Activated naive CD4-positive, alpha-beta T cell treated with anti-CD3 and anti-CD28 coated beads for 36 hours (primary cell): ENCODE measurements at regions of chr2 and their contacts with region 1.

Region 1: DNA sequence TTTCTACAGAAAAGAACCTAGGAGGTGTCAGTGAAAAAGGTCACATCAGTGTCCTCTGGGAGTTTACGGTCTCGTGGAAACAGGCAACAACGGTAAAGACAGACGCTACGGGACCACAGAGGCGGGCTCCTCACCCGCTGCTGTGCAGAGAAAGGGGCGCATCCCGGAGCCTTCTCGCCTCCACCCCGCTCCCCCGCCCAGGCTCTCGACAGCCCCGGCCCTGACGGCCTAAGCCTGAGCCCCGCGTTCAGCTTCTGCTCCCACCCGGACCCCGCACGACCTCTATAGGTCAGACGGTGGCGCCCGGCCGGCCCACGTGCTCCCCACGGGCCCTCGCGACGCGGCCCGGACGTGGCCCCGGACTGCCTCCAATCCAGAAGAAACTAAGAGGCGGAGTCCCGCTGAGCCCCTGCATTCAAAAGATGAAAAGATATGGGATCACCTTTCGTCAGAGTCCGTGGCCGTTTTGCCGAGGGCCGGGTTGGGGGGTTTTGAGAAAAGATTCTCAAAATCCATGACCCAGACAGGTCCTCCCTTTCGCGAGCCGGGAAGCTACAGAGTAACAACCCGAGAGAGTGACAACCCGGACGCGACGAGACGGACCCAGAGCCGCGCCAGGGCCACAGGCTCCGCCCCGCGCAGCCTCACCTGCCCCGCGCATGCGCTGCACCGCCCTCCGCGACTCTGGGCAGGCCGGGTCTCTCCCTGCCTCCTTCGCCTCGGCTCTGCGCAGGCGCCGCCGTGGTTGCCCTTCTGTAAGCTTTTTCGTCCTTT is at the start of gene ZC3H8:
- DNase-seq: peak; percentile 97
- H3K4me3 Mint-ChIP-seq: peak within 1 kb of the TSS; percentile 83
- H3K27ac Mint-ChIP-seq: peak within 1 kb of the TSS; percentile 92
- H3K4me1 Mint-ChIP-seq: peaks cover 10% of the 10 kb centered on the region
- H3K27me3 Mint-ChIP-seq: no peaks in the 10 kb centered on the region
- total RNA-seq, gene ZC3H8: 15.5 to 18.7 TPM

Region 2: GRCh38 chr2:112054847-112055729 is 199.6 kb before region 1 on chr2 and contains the start of gene TMEM87B:
- CTCF ChIA-PET with region 1: no interaction called
- intact Hi-C with region 1: loop called (anchors 1 kb)
- DNase-seq: peak; percentile 99
- H3K4me3 Mint-ChIP-seq: peak within 1 kb of the TSS; percentile 97
- H3K27ac Mint-ChIP-seq: peak within 1 kb of the TSS; percentile 99
- H3K4me1 Mint-ChIP-seq: peaks cover 42% of the 10 kb centered on the region
- H3K27me3 Mint-ChIP-seq: no peaks in the 10 kb centered on the region
- total RNA-seq, gene TMEM87B: 10.5 to 12.0 TPM

Region 3: GRCh38 chr2:112138159-112138773 is 116.4 kb before region 1 on chr2 and contains the start of gene FBLN7:
- CTCF ChIA-PET with region 1: no interaction called
- intact Hi-C with region 1: loop called (anchors 5 kb)
- DNase-seq: peak; percentile 22
- H3K4me3 Mint-ChIP-seq: peak within 1 kb of the TSS; percentile 62
- H3K27ac Mint-ChIP-seq: peak within 1 kb of the TSS; percentile 55
- H3K4me1 Mint-ChIP-seq: peaks cover 7% of the 10 kb centered on the region
- H3K27me3 Mint-ChIP-seq: peaks cover 23% of the 10 kb centered on the region
- total RNA-seq, gene FBLN7: 34.5 to 39.0 TPM

Region 4: DNA sequence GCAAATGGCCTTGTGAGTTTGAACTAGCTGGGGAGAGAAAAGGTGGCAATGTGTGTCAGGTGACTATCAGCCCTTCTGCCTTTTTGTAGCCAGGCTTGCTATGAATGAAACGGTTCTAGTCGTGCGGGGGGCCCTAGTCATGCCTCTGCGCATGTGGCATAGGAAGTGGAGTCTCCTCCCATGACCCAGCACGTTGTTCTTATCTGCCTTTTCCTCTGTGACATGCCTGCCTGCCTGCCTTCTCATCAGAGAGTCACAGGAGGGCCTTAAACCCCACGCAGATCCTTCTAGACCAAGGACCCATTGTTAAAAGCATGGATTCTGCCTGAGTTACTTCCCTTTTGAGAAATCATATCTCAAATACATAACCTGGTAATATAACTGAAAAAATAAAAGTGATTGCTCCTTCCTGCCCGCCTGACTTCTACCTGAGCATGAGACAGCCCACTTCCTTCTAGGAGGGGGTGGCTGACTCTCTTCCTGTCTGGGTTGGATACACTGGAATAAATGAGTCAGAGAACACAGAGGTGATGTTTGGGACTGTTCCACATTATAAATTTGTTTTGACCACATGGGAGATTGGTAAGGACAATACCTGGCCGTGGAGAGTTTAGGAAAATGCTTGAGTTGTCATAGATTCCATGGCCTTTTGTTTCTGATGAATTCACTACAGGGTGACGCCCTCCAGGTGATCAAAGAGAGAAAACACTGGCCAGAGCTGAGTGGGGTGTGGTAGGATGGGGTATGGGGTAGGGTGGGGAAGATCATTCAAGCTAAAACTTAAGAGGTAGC is 66.7 kb before region 1 on chr2:
- CTCF ChIA-PET with region 1: interaction called, 6 read pairs
- intact Hi-C with region 1: loop called (anchors 1 kb)
- DNase-seq: peak; percentile 92
- H3K4me3 Mint-ChIP-seq: peak overlapping the region; percentile 63
- H3K27ac Mint-ChIP-seq: peak overlapping the region; percentile 99
- H3K4me1 Mint-ChIP-seq: peaks cover 87% of the 10 kb centered on the region
- H3K27me3 Mint-ChIP-seq: no peaks in the 10 kb centered on the region

Region 5: GRCh38 chr2:112275306-112275886 is 20.7 kb after region 1 on chr2 and contains the start of gene ZC3H6:
- CTCF ChIA-PET with region 1: interaction called, 5 read pairs
- intact Hi-C with region 1: loop called (anchors 1 kb)
- DNase-seq: peak; percentile 99
- H3K4me3 Mint-ChIP-seq: peak within 1 kb of the TSS; percentile 93
- H3K27ac Mint-ChIP-seq: peak within 1 kb of the TSS; percentile 97
- H3K4me1 Mint-ChIP-seq: peaks cover 24% of the 10 kb centered on the region
- H3K27me3 Mint-ChIP-seq: no peaks in the 10 kb centered on the region
- total RNA-seq, gene ZC3H6: 18.5 to 18.7 TPM

Region 6: GRCh38 chr2:112542123-112542983 is 287.7 kb after region 1 on chr2 and contains the start of gene POLR1B:
- CTCF ChIA-PET with region 1: no interaction called
- intact Hi-C with region 1: loop called (anchors 1 kb)
- DNase-seq: peak; percentile 82
- H3K4me3 Mint-ChIP-seq: no peak within 1 kb of the TSS
- H3K27ac Mint-ChIP-seq: no peak within 1 kb of the TSS
- H3K4me1 Mint-ChIP-seq: peaks cover 19% of the 10 kb centered on the region
- H3K27me3 Mint-ChIP-seq: no peaks in the 10 kb centered on the region
- total RNA-seq, gene POLR1B: 34.5 to 36.1 TPM